CD4-positive, alpha-beta T cell (primary cell): ENCODE measurements at regions of chr14 and their contacts with region 1.

Region 1: GRCh38 chr14:73026845-73027542 is at the start of gene ZFYVE1:
- DNase-seq: peak; percentile 76 to 96 (median 86)
- ATAC-seq: peak; percentile 99
- H3K4me3 ChIP-seq: peak within 1 kb of the TSS; percentile 64
- H3K4me3 Mint-ChIP-seq: peak within 1 kb of the TSS; percentile 97
- H3K27ac ChIP-seq: no peak within 1 kb of the TSS
- H3K27ac Mint-ChIP-seq: peak within 1 kb of the TSS; percentile 79
- H3K4me1 ChIP-seq: peaks cover 18% of the 10 kb centered on the region
- H3K4me1 Mint-ChIP-seq: peaks cover 47% of the 10 kb centered on the region
- H3K27me3 ChIP-seq: no peaks in the 10 kb centered on the region
- H3K27me3 Mint-ChIP-seq: no peaks in the 10 kb centered on the region
- CTCF ChIP-seq: no peak
- total RNA-seq, gene ZFYVE1: 9.3 to 10.9 TPM

Region 2: GRCh38 chr14:73008501-73008900 is 18.5 kb before region 1 on chr14:
- CTCF ChIA-PET with region 1: no interaction called
- POLR2A ChIA-PET with region 1: no interaction called
- intact Hi-C with region 1: no loop called
- DNase-seq: no peak
- ATAC-seq: no peak
- H3K4me3 ChIP-seq: no peak overlapping the region
- H3K4me3 Mint-ChIP-seq: no peak overlapping the region
- H3K27ac ChIP-seq: no peak overlapping the region
- H3K27ac Mint-ChIP-seq: no peak overlapping the region
- H3K4me1 ChIP-seq: no peaks in the 10 kb centered on the region
- H3K4me1 Mint-ChIP-seq: peaks cover under 1% of the 10 kb centered on the region
- H3K27me3 ChIP-seq: no peaks in the 10 kb centered on the region
- H3K27me3 Mint-ChIP-seq: no peaks in the 10 kb centered on the region
- CTCF ChIP-seq: no peak

Region 3: GRCh38 chr14:73136387-73137225 is 109.6 kb after region 1 on chr14 and contains the start of gene PSEN1:
- CTCF ChIA-PET with region 1: interaction called, 3 read pairs
- POLR2A ChIA-PET with region 1: interaction called, 9 read pairs
- intact Hi-C with region 1: loop called in 1 of 2 experiments (anchors 2 kb)
- DNase-seq: peak; percentile 97 to 99 (median 99)
- ATAC-seq: peak; percentile 93
- H3K4me3 ChIP-seq: peak within 1 kb of the TSS; percentile 98
- H3K4me3 Mint-ChIP-seq: peak within 1 kb of the TSS; percentile 98
- H3K27ac ChIP-seq: peak within 1 kb of the TSS; percentile 92
- H3K27ac Mint-ChIP-seq: peak within 1 kb of the TSS; percentile 99
- H3K4me1 ChIP-seq: peaks cover 23% of the 10 kb centered on the region
- H3K4me1 Mint-ChIP-seq: peaks cover 31% of the 10 kb centered on the region
- H3K27me3 ChIP-seq: no peaks in the 10 kb centered on the region
- H3K27me3 Mint-ChIP-seq: no peaks in the 10 kb centered on the region
- CTCF ChIP-seq: no peak
- total RNA-seq, gene PSEN1: 27.1 to 28.3 TPM

Region 4: DNA sequence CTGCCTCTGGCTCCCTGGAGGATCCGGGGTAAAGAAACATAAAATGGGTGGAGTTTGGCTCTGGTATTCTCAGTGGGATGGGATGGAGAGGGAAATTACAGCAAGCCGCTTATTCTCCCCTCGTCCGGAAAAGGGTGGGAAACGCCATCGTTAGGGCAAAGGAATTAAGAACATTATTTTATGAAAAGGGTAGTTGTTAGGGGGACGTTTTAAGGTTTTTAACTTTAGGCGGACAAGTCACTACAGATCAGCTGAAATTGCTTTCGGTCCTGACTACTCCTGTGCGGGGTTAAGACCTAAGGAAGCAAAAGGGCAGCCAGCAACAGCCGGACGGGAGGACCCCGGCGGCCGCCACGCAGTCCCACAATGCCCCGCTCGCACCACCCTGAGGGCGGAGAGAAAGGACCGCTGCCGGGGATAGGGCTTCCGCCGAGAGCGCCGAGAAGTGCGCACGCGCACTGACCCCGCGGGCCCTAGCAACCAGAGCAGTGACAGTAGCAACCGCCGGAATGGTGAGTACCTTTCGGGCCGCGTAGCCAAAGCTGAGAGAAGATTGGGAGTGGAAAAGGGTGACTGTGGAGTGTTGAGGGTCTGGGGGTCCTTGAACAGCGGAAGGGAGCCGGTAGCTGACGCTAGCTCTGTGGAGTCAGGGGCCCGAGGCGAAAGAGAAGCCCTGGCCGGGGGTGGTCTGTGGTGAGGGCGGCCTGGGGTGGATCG is 617.7 kb after region 1 on chr14 and contains the start of gene DNAL1:
- CTCF ChIA-PET with region 1: no interaction called
- POLR2A ChIA-PET with region 1: no interaction called
- intact Hi-C with region 1: loop called in 1 of 2 experiments (anchors 10 kb)
- DNase-seq: peak; percentile 82 to 96 (median 88)
- ATAC-seq: peak; percentile 99
- H3K4me3 ChIP-seq: peak within 1 kb of the TSS; percentile 88
- H3K4me3 Mint-ChIP-seq: peak within 1 kb of the TSS; percentile 91
- H3K27ac ChIP-seq: peak within 1 kb of the TSS; percentile 39 to 63
- H3K27ac Mint-ChIP-seq: peak within 1 kb of the TSS; percentile 76
- H3K4me1 ChIP-seq: peaks cover 13% of the 10 kb centered on the region
- H3K4me1 Mint-ChIP-seq: peaks cover 20% of the 10 kb centered on the region
- H3K27me3 ChIP-seq: no peaks in the 10 kb centered on the region
- H3K27me3 Mint-ChIP-seq: no peaks in the 10 kb centered on the region
- CTCF ChIP-seq: no peak
- total RNA-seq, gene DNAL1: 2.9 to 3.7 TPM